Activated B cell treated with CpG ODN at 0.5 μM for 24 hours (primary cell): ENCODE measurements at regions of chr12 and their contacts with region 1.

Region 1: DNA sequence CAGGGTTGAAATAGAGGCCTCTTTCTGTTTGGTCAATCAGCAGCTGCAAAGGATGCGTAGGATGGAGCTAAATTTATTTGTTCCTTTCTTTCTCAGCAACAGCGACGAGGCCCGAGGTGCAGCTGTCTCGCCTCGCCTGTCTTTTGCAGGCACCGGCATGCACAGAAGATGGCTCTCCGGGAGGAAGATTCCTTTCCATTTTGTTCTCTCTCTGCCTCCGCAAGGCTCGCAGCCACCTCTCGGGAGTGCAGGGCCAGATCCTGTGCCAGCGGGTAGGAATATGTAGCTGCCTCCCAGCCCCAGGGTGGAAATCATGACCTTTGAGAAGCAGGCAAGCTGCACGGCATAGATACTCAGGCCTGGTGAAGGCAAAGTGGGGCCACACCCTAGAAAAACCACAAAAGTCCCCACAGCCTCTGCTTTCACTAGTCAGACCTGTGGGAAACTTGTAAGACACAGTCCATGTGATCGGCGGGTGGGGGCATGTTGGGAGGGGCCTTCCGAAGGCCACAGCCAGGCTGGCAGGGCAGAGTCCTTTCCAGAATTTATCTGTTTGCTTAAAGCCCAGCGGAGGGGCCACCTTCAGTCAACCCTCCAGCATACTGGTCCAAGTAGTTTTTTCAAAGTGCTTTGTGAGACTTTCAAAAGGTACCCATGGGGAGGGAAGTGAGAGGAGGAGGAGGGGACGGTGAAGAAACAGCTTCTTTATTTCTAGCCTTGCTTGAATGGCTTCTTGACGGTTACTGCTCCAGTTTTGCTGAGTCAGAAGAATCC is at the start of gene MAP1LC3B2:
- DNase-seq: peak; percentile 77
- ATAC-seq: peak; percentile 83
- H3K4me3 Mint-ChIP-seq: peak within 1 kb of the TSS; percentile 84
- H3K27ac Mint-ChIP-seq: peak within 1 kb of the TSS; percentile 100
- H3K4me1 Mint-ChIP-seq: peaks cover 62% of the 10 kb centered on the region
- H3K27me3 Mint-ChIP-seq: no peaks in the 10 kb centered on the region
- CTCF ChIP-seq: no peak
- total RNA-seq, gene MAP1LC3B2: 1.0 and 1.9 TPM in 2 replicates

Region 2: GRCh38 chr12:116236148-116236731 is 323.1 kb before region 1 on chr12:
- CTCF ChIA-PET with region 1: interaction called, 10 read pairs
- POLR2A ChIA-PET with region 1: interaction called, 6 read pairs
- intact Hi-C with region 1: no loop called
- DNase-seq: no peak
- ATAC-seq: peak; percentile 65
- H3K4me3 Mint-ChIP-seq: no peak overlapping the region
- H3K27ac Mint-ChIP-seq: peak overlapping the region; percentile 67
- H3K4me1 Mint-ChIP-seq: peaks cover 44% of the 10 kb centered on the region
- H3K27me3 Mint-ChIP-seq: no peaks in the 10 kb centered on the region
- CTCF ChIP-seq: peak; percentile 40

Region 3: DNA sequence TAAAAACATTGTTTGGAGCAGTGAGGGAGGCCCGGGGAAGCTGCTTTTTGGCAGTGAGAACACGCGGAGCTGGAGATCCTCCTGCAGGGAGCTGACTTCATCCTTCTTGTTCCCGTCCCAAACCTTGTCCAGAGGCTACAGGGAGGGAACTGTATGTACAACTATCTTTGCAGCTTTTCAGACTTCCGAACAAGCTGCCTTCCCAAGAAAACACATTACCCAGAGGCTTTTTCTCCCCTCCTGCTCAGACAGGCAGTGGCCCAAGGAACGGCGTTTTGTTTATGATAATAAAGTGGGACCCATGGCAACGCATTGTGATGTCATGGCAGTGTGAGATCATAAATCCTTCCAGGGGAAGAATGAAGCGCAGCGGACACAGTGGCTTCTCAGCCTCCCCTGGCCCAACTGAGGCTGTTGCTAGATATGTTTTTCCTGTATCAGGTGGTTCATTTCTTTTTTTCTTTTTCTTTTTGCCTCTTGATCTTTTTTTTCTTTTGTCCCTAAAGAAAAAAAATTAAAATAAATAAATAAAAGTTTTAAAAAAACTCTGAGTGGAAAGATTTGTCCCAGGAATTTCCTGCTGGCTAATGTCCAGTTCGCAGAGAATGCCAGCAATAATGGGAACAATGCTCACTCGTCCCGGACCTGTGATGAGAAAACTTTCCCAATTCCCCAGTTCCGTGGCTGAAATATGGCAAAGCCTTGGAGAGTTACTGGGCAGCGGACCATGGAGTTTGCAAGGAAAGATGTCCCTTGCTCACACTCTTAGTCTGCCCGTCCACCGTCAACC is 103.6 kb before region 1 on chr12:
- CTCF ChIA-PET with region 1: interaction called, 4 read pairs
- POLR2A ChIA-PET with region 1: interaction called, 24 read pairs
- intact Hi-C with region 1: loop called (anchors 1 kb)
- DNase-seq: no peak
- ATAC-seq: no peak
- H3K4me3 Mint-ChIP-seq: no peak overlapping the region
- H3K27ac Mint-ChIP-seq: no peak overlapping the region
- H3K4me1 Mint-ChIP-seq: peaks cover 38% of the 10 kb centered on the region
- H3K27me3 Mint-ChIP-seq: no peaks in the 10 kb centered on the region
- CTCF ChIP-seq: no peak

Region 4: GRCh38 chr12:116520801-116521471 is 38.4 kb before region 1 on chr12:
- CTCF ChIA-PET with region 1: no interaction called
- POLR2A ChIA-PET with region 1: no interaction called
- intact Hi-C with region 1: no loop called
- DNase-seq: no peak
- ATAC-seq: no peak
- H3K4me3 Mint-ChIP-seq: no peak overlapping the region
- H3K27ac Mint-ChIP-seq: no peak overlapping the region
- H3K4me1 Mint-ChIP-seq: peaks cover 6% of the 10 kb centered on the region
- H3K27me3 Mint-ChIP-seq: no peaks in the 10 kb centered on the region
- CTCF ChIP-seq: no peak

Region 5: GRCh38 chr12:116539905-116540482 is 19.4 kb before region 1 on chr12:
- CTCF ChIA-PET with region 1: interaction called, 5 read pairs
- POLR2A ChIA-PET with region 1: interaction called, 124 read pairs
- intact Hi-C with region 1: loop called (anchors 1 kb)
- DNase-seq: no peak
- ATAC-seq: no peak
- H3K4me3 Mint-ChIP-seq: no peak overlapping the region
- H3K27ac Mint-ChIP-seq: peak overlapping the region; percentile 19
- H3K4me1 Mint-ChIP-seq: peaks cover 52% of the 10 kb centered on the region
- H3K27me3 Mint-ChIP-seq: no peaks in the 10 kb centered on the region
- CTCF ChIP-seq: no peak

Region 6: GRCh38 chr12:116599285-116600136 is 40.2 kb after region 1 on chr12:
- CTCF ChIA-PET with region 1: interaction called, 24 read pairs
- POLR2A ChIA-PET with region 1: interaction called, 10 read pairs
- intact Hi-C with region 1: loop called (anchors 1 kb)
- DNase-seq: peak; percentile 62
- ATAC-seq: peak; percentile 86
- H3K4me3 Mint-ChIP-seq: peak overlapping the region; percentile 45
- H3K27ac Mint-ChIP-seq: peak overlapping the region; percentile 18
- H3K4me1 Mint-ChIP-seq: peaks cover 28% of the 10 kb centered on the region
- H3K27me3 Mint-ChIP-seq: no peaks in the 10 kb centered on the region
- CTCF ChIP-seq: peak; percentile 35